Activated CD8-positive, alpha-beta memory T cell treated with anti-CD3 and anti-CD28 coated beads, Interleukin-2, amount 10 ng/mL, durations not matched to agents 7 days and 5 days (primary cell): ENCODE measurements at regions of chr12 and their contacts with region 1.

Region 1: GRCh38 chr12:56206457-56207166 is 15.1 kb downstream of the RNF41 start:
- DNase-seq: peak; percentile 63
- ATAC-seq: peak; percentile 62
- H3K4me3 Mint-ChIP-seq: no peak overlapping the region
- H3K27ac Mint-ChIP-seq: no peak overlapping the region
- H3K4me1 Mint-ChIP-seq: no peaks in the 10 kb centered on the region
- H3K27me3 Mint-ChIP-seq: no peaks in the 10 kb centered on the region

Region 2: DNA sequence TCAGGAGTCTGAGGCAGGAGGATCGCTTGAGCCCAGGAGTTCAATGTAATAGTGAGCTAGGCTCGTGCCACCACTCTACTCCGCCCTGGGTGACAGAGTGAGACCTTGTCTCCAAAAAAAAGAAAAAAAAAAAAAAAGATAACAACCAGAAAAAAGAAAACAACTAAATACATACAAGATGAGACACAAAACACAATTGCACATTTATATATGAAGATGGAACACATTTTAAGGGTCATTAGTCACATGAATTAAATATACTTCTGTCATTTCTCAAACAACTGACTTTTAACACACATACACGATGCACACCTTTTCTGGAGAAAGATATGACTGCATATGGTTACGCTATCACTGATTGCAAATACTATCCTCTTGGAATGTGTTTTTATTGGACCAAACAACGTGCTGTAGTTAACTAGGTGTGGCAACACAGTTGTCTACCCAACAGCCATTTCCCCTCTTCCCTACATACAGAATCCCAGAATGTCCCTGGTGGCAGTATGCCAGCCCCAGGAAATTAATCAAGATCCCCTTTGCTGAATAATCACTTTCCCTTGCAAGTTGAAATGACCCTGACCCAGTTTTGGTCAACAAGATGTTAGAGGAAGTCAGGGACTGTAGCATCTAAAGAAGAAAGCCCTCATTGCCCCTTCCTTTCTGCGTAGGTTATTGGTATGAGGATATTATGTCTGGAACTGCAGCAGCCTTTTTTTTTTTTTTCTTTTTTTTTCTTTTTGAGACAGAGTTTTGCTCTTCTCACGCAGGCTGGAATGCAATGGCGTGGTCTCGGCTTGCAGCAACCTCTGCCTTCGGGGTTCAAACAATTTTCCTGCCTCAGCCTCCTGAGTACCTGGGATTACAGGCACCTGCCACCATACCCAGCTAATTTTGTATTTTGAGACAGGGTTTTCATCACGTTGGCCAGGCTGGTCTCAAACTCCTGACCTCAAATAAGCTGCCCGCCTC is 59.8 kb before region 1 on chr12:
- CTCF ChIA-PET with region 1: no interaction called
- DNase-seq: no peak
- ATAC-seq: no peak
- H3K4me3 Mint-ChIP-seq: no peak overlapping the region
- H3K27ac Mint-ChIP-seq: peak overlapping the region; percentile 23
- H3K4me1 Mint-ChIP-seq: peaks cover 37% of the 10 kb centered on the region
- H3K27me3 Mint-ChIP-seq: no peaks in the 10 kb centered on the region

Region 3: DNA sequence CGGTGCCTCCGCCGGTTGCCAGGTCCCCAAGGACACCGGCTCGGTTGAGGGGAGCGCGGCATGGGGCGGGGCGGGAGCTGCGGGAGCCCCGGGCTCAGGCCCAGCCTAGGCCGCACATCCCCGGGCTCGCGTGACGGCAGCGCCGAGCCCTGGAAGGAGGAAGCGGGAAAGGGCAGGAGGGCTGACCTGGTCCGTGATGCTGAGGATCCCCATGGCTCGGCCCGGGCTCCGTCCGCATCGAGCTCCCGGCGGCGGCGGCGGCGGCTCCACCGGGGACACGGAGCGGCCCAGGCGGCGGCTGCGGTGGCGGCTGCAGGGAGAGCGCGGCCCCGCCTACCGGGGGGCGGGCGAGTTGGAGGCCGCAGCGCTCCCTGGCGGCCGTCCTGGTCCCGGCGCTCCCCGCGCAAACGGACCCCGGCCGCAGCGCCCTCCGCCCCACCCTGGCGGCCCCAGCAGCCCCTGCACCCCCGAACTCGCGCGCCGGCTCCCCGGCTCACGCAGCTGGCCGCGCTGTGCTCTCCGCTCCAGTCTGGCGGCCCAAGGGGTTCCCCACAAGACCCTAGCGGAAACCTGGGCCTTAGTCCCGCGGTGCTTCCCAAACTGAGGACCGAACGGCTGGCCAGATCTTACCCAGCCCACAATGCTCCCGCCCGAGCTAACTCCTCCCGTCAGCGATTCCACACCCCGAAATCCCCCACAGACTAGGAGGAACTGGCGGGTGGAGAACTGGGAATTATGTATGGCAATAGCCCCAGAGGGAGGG is 51.6 kb after region 1 on chr12 and contains the start of gene ANKRD52:
- CTCF ChIA-PET with region 1: interaction called, 16 read pairs
- DNase-seq: peak; percentile 81
- ATAC-seq: peak; percentile 95
- H3K4me3 Mint-ChIP-seq: peak within 1 kb of the TSS; percentile 90
- H3K27ac Mint-ChIP-seq: peak within 1 kb of the TSS; percentile 88
- H3K4me1 Mint-ChIP-seq: peaks cover 23% of the 10 kb centered on the region
- H3K27me3 Mint-ChIP-seq: peaks cover 3% of the 10 kb centered on the region
- total RNA-seq, gene ANKRD52: 66.9 to 68.3 TPM

Region 4: GRCh38 chr12:56266693-56267442 is 60.3 kb after region 1 on chr12 and contains the start of gene COQ10A:
- CTCF ChIA-PET with region 1: interaction called, 14 read pairs
- DNase-seq: peak; percentile 93
- ATAC-seq: peak; percentile 94
- H3K4me3 Mint-ChIP-seq: peak within 1 kb of the TSS; percentile 85
- H3K27ac Mint-ChIP-seq: peak within 1 kb of the TSS; percentile 89
- H3K4me1 Mint-ChIP-seq: peaks cover 19% of the 10 kb centered on the region
- H3K27me3 Mint-ChIP-seq: no peaks in the 10 kb centered on the region
- total RNA-seq, gene COQ10A: 16.0 to 17.4 TPM

Region 5: DNA sequence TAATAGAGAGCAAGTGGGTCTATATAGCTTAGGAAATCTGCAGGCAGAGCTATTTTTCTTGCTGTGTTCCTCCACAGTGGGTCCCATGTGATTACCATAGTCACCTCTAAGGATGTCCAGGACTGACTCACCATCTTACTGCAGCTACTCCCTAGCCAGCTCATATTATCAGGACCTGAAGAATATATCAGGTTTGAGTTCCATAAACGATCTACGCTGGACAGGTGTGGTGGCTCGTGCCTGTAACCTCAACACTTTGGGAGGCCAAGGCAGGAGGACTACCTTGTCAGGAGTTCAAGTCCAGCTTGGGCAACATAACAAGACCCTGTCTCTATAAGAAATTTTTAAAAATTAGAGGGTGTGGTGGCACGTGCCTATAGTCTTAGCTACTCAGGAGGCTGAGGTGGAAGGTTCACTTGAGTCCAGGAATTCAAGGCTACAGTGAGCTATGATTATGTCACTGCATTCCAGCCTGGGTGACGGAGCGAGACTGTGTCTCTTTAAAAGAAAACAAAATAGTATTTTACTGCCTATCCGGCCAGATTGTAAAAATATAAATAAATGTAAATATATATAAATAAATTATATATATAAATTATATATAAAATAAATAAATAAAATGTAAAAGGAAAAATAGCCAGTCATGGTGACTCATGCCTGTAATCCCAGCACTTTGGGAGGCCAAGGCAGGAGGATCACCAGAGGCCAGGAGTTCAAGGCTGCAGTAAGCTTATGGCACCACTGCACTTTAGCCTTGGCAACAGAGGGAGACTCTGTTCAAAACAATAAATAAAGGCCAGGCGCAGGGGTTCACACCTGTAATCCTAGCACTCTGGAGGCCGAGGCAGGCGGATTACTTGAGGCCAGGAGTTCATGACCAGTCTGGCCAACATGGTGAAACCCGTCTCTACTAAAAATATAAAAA is 254.9 kb after region 1 on chr12:
- CTCF ChIA-PET with region 1: interaction called, 17 read pairs
- DNase-seq: no peak
- ATAC-seq: no peak
- H3K4me3 Mint-ChIP-seq: no peak overlapping the region
- H3K27ac Mint-ChIP-seq: no peak overlapping the region
- H3K4me1 Mint-ChIP-seq: peaks cover 5% of the 10 kb centered on the region
- H3K27me3 Mint-ChIP-seq: no peaks in the 10 kb centered on the region